Activated naive CD4-positive, alpha-beta T cell treated with anti-CD3 and anti-CD28 coated beads for 36 hours (primary cell): ENCODE measurements at regions of chr15 and their contacts with region 1.

Region 1: DNA sequence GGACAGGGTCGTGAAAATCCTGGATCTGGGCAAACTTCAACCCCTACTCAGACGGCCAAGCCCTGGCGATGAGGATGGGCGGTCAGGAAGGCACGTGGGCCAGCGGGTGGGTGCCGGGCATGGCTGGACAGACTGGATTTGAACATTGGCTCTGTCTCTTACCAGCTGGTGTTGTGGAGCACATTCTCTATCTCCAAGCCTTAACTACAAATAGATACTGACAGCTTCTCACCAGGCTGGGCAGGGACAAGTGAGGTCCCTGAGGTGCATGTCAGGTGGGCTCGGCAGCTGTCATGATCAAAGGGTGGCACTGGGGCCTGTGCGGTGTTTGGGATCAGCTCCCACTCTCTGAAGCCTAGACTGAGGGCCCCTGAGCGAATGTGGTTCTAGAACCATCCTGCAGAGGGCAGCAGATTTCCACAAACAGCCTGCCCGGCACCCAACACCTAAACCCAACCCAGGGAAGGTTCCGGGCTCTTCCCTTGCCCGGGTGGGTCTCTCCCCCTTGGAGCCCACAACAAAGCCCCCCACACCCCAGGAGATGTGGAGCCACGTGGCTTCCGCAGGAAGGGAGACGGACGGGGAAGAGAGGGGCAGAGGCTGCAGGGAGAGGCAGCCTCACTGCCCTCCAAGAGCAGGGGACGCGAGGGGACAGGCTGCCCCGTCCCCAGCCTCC is 58.4 kb downstream of the RGMA start:
- DNase-seq: peak; percentile 78
- H3K4me3 Mint-ChIP-seq: no peak overlapping the region
- H3K27ac Mint-ChIP-seq: no peak overlapping the region
- H3K4me1 Mint-ChIP-seq: peaks cover 33% of the 10 kb centered on the region
- H3K27me3 Mint-ChIP-seq: no peaks in the 10 kb centered on the region

Region 2: DNA sequence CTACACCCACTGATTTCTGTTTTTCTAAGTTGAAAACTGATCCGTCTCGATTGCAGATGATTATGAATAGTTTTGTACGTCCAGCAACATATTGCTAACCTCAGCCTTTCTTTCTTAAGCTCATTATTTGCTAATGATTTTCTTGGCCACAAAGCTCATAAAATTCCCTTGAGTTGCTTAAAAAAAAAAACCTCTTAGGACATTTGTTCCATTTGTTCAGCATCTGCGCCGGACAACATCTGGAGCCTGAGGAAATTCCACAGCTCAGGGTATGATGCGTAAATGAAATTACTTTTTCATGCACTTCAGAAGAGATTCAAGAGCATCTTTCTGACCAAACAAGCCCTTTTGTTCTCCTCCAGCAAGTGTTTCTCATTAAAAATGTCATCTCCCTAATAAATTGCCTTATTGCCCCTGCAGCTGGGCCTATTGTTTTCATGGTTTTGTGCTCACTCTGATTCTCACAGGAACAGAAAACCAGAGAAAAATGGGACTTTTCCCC is 951.7 kb after region 1 on chr15:
- CTCF ChIA-PET with region 1: no interaction called
- intact Hi-C with region 1: loop called (anchors 10 kb)
- DNase-seq: no peak
- H3K4me3 Mint-ChIP-seq: no peak overlapping the region
- H3K27ac Mint-ChIP-seq: no peak overlapping the region
- H3K4me1 Mint-ChIP-seq: peaks cover 12% of the 10 kb centered on the region
- H3K27me3 Mint-ChIP-seq: no peaks in the 10 kb centered on the region

Region 3: GRCh38 chr15:94080418-94080817 is 1049.8 kb after region 1 on chr15:
- CTCF ChIA-PET with region 1: no interaction called
- intact Hi-C with region 1: no loop called
- DNase-seq: no peak
- H3K4me3 Mint-ChIP-seq: no peak overlapping the region
- H3K27ac Mint-ChIP-seq: no peak overlapping the region
- H3K4me1 Mint-ChIP-seq: no peaks in the 10 kb centered on the region
- H3K27me3 Mint-ChIP-seq: peaks cover 4% of the 10 kb centered on the region